ENCODE measurements at regions of chr10 and their contacts with region 1.

Region 1: GRCh38 chr10:35781643-35782035 is 139.5 kb upstream of the FZD8 start:
- DNase-seq: no peak
- ATAC-seq: no peak
- H3K4me3 ChIP-seq: no peak overlapping the region
- H3K27ac ChIP-seq: no peak overlapping the region
- H3K4me1 ChIP-seq: no peaks in the 10 kb centered on the region
- H3K27me3 ChIP-seq: no peaks in the 10 kb centered on the region
- CTCF ChIP-seq: peak in 2 of 3 experiments; percentile 17 to 22; a peak in 1 of 6 replicates
- EP300 ChIP-seq: no peak
- POLR2A ChIP-seq: no peak
- RAD21 ChIP-seq: 0 out of 2 replicates have a peak, but pooled peaks have one; percentile 6

Region 2: GRCh38 chr10:35103882-35104281 is 677.8 kb before region 1 on chr10:
- CTCF ChIA-PET with region 1: no interaction called
- POLR2A ChIA-PET with region 1: no interaction called
- RAD21 ChIA-PET with region 1: no interaction called
- SMC1A ChIA-PET with region 1: no interaction called
- in situ Hi-C with region 1: loop called (anchors 25 kb)
- intact Hi-C with region 1: no loop called
- DNase-seq: no peak
- ATAC-seq: no peak
- H3K4me3 ChIP-seq: no peak overlapping the region
- H3K27ac ChIP-seq: no peak overlapping the region
- H3K4me1 ChIP-seq: no peaks in the 10 kb centered on the region
- H3K27me3 ChIP-seq: no peaks in the 10 kb centered on the region
- CTCF ChIP-seq: no peak
- EP300 ChIP-seq: no peak
- POLR2A ChIP-seq: no peak
- RAD21 ChIP-seq: no peak

Region 3: GRCh38 chr10:35768011-35768410 is 13.6 kb before region 1 on chr10:
- CTCF ChIA-PET with region 1: interaction called, 3 read pairs
- POLR2A ChIA-PET with region 1: no interaction called
- RAD21 ChIA-PET with region 1: interaction called, 4 read pairs
- SMC1A ChIA-PET with region 1: interaction called, 20 read pairs
- in situ Hi-C with region 1: no loop called
- intact Hi-C with region 1: no loop called
- DNase-seq: no peak
- ATAC-seq: no peak
- H3K4me3 ChIP-seq: no peak overlapping the region
- H3K27ac ChIP-seq: no peak overlapping the region
- H3K4me1 ChIP-seq: no peaks in the 10 kb centered on the region
- H3K27me3 ChIP-seq: no peaks in the 10 kb centered on the region
- CTCF ChIP-seq: no peak
- EP300 ChIP-seq: no peak
- POLR2A ChIP-seq: no peak
- RAD21 ChIP-seq: no peak

Region 4: DNA sequence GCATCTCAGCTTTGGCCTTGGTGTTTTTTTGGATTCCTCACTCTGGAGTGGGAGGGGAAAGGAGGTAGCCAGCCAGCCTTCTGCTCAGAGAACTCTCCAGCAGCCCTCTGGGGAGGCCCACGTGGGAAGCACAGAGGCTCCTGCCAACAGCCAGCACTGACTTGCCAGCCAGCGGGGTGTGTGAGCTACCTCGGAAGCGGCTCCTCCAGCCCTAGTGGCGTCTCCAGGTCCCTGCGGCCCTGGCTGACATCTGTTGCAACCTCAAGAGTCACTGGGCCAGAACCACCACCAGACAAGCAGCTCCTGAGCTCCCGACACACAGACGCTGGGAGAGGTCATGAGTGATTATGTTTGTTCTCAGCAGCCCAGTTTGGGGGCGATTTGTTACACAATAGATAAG is 40.7 kb after region 1 on chr10:
- CTCF ChIA-PET with region 1: no interaction called
- POLR2A ChIA-PET with region 1: interaction called, 3 read pairs
- RAD21 ChIA-PET with region 1: interaction called, 5 read pairs
- SMC1A ChIA-PET with region 1: interaction called, 12 read pairs
- in situ Hi-C with region 1: no loop called
- intact Hi-C with region 1: no loop called
- DNase-seq: no peak
- ATAC-seq: peak; percentile 77
- H3K4me3 ChIP-seq: no peak overlapping the region
- H3K27ac ChIP-seq: no peak overlapping the region
- H3K4me1 ChIP-seq: no peaks in the 10 kb centered on the region
- H3K27me3 ChIP-seq: no peaks in the 10 kb centered on the region
- CTCF ChIP-seq: no peak
- EP300 ChIP-seq: no peak
- POLR2A ChIP-seq: no peak
- RAD21 ChIP-seq: no peak

Region 5: DNA sequence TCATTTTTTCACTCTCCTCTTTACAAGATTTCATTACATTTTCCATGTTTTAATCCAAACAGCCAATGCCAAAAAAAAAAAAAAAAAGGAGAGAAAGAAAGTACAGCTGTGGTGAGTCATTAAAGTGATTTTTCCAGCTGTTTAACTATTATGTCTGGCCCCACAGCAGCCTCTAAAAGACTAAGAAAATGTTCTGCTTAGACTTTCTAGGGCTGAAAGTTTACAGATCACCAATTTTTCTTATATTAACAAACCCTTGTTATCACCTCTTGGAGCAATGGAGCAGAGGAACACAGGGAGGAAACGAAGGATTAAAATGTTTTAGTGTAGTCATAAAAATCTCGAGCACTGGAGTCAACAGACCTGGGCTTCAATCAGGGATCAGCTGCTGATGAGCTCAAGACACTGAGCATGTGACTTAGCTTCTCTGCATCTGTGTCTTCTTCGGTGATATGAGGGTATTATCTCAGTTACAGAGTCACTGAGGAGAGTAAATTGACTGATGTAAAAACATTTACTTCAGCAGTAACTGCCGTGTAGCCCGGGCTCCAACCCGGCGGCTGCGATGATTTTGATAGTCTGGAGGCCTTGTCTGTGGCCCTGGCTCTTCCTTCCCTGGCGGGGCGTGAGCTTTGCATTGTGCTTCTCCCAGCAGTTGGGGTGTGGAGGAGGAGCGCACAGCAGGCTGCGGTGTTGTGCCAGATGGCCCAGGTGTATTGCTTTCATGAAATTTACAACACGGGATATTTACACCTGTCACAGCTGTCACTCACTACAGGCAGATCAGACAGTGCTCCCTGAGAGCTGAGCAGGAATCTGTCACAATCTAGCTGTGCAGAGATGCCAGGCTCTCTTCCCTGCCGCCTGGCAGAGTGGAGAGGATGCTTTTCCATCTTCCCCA is 158.8 kb after region 1 on chr10:
- CTCF ChIA-PET with region 1: no interaction called
- POLR2A ChIA-PET with region 1: no interaction called
- RAD21 ChIA-PET with region 1: no interaction called
- SMC1A ChIA-PET with region 1: no interaction called
- in situ Hi-C with region 1: no loop called
- intact Hi-C with region 1: no loop called
- DNase-seq: no peak
- ATAC-seq: no peak
- H3K4me3 ChIP-seq: no peak overlapping the region
- H3K27ac ChIP-seq: no peak overlapping the region
- H3K4me1 ChIP-seq: no peaks in the 10 kb centered on the region
- H3K27me3 ChIP-seq: no peaks in the 10 kb centered on the region
- CTCF ChIP-seq: no peak
- EP300 ChIP-seq: no peak
- POLR2A ChIP-seq: no peak
- RAD21 ChIP-seq: no peak

Region 6: DNA sequence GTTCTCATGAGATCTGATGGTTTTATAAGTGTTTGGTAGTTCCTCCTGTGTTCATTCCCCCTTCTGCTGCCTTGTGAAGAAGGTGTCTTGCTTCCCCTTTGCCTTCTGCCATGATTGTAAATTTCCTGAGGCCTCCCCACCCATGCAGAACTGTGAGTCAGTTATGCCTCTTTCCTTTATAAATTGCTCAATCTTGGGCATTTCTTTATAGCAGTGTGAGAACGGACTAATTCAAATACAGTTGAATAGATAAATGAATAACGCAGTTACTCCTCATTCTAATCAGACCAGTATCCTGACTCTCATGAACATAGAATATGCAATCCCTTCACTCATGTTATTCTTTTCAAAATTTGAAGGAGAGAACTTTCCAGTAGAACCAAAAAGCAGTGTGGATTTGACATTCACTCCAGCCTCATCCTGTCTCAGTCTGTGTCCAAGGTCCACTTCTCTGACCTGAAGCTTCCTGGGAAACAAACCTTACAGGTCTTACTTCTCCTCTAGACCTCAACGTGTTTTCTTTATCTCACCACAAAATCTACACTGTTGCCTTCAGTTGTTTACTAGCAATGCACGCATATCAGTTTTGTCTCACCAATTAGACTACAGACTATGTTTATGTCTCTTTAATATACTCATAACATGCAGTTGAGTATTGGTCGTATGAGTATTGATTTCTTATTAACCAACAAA is 235.6 kb after region 1 on chr10:
- CTCF ChIA-PET with region 1: no interaction called
- POLR2A ChIA-PET with region 1: no interaction called
- RAD21 ChIA-PET with region 1: no interaction called
- SMC1A ChIA-PET with region 1: no interaction called
- in situ Hi-C with region 1: no loop called
- intact Hi-C with region 1: no loop called
- DNase-seq: no peak
- ATAC-seq: no peak
- H3K4me3 ChIP-seq: no peak overlapping the region
- H3K27ac ChIP-seq: no peak overlapping the region
- H3K4me1 ChIP-seq: no peaks in the 10 kb centered on the region
- H3K27me3 ChIP-seq: no peaks in the 10 kb centered on the region
- CTCF ChIP-seq: no peak
- EP300 ChIP-seq: no peak
- POLR2A ChIP-seq: no peak
- RAD21 ChIP-seq: no peak